ENCODE measurements at regions of chr9 and their contacts with region 1.

Region 1: DNA sequence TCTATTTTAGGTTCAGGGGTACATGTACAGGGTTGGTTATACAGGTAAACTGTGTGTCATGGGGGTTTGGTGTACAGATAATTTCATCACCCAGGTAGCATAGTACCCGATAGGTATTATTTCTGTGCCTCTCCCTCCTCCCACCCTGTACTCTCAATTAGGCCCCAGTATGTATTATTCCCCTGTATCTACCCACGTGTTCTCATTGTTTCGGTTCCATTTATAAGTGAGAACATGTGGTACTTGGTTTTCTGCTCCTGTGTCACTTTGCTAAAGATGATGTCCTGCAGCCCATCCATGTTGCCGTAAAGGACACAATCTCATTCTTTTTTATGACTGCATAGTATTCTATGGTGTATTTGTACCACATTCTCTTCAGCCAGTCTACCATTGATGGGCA is 96.8 kb upstream of the SLC24A2 start:
- DNase-seq: no peak
- H3K4me3 ChIP-seq: no peak overlapping the region
- H3K27ac ChIP-seq: no peak overlapping the region
- H3K4me1 ChIP-seq: no peaks in the 10 kb centered on the region
- H3K27me3 ChIP-seq: no peaks in the 10 kb centered on the region
- CTCF ChIP-seq: no peak
- EP300 ChIP-seq: no peak
- POLR2A ChIP-seq: no peak

Region 2: GRCh38 chr9:19828576-19829109 is 57.0 kb before region 1 on chr9:
- intact Hi-C with region 1: loop called (anchors 10 kb)
- DNase-seq: peak in 1 of 2 donors; percentile 1
- H3K4me3 ChIP-seq: no peak overlapping the region
- H3K27ac ChIP-seq: no peak overlapping the region
- H3K4me1 ChIP-seq: no peaks in the 10 kb centered on the region
- H3K27me3 ChIP-seq: no peaks in the 10 kb centered on the region
- CTCF ChIP-seq: no peak
- EP300 ChIP-seq: no peak
- POLR2A ChIP-seq: no peak

Measured in stomach (tissue), 19 donors.